ENCODE measurements at regions of chr11 and their contacts with region 1.

Region 1: GRCh38 chr11:17063171-17064002 is 14.1 kb downstream of the RPS13 start:
- DNase-seq: peak; percentile 70 to 87 (median 87)
- ATAC-seq: peak; percentile 92 to 94
- H3K4me3 ChIP-seq: no peak overlapping the region
- H3K27ac ChIP-seq: no peak overlapping the region
- H3K4me1 ChIP-seq: no peaks in the 10 kb centered on the region
- H3K27me3 ChIP-seq: no peaks in the 10 kb centered on the region

Region 2: GRCh38 chr11:16820324-16821092 is 242.9 kb before region 1 on chr11:
- intact Hi-C with region 1: loop called in 1 of 4 experiments (anchors 5 kb)
- DNase-seq: peak; percentile 82 to 94 (median 90)
- ATAC-seq: peak; percentile 60 to 74
- H3K4me3 ChIP-seq: no peak overlapping the region
- H3K27ac ChIP-seq: peak overlapping the region; percentile 61
- H3K4me1 ChIP-seq: peaks cover 6% of the 10 kb centered on the region
- H3K27me3 ChIP-seq: no peaks in the 10 kb centered on the region

Region 3: GRCh38 chr11:16881074-16881709 is 182.2 kb before region 1 on chr11:
- intact Hi-C with region 1: no loop called
- DNase-seq: peak; percentile 70 to 81 (median 79)
- ATAC-seq: peak; percentile 86 to 91
- H3K4me3 ChIP-seq: no peak overlapping the region
- H3K27ac ChIP-seq: no peak overlapping the region
- H3K4me1 ChIP-seq: peaks cover 7% of the 10 kb centered on the region
- H3K27me3 ChIP-seq: no peaks in the 10 kb centered on the region

Region 4: DNA sequence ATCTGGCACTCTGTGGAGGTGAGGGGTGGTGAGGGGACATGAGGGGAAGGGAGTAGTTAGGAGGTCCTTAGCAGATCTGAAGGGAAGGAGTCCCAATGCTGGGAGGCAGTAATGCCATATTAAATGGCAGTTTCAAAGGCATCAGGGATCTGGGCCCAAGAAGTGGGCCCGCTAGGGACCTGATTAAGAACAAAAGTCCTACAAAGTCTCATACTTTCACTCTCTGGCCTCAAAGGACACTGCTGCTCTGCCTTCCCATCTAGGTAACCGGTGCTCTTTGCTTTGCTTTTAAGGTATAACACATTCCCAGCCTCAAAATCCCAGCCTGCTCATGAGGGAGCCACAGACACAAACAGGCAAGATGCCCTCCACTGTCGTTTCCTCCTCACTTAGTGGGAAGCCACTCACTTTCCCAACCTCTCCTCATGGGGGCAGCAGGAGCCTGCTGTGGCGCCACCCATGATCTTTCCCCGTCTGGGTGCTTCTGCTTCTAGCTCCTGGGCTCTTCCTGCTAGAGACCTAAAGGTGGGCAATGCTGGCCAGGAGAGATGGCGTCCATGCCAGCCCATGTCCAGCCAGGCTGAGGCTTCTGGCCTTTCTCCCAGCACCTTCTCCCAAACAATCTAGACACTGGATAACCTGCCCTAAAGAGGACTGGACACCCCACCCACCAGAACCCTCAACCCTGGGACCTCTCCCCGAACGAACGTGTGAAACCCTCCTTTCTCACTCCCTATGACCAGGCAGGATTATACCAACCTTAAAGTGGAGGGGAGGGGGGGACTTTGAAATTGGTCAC is 117.5 kb before region 1 on chr11:
- intact Hi-C with region 1: loop called (anchors 2 to 5 kb)
- DNase-seq: peak; percentile 53 to 75 (median 71)
- ATAC-seq: peak; percentile 78 to 80
- H3K4me3 ChIP-seq: no peak overlapping the region
- H3K27ac ChIP-seq: no peak overlapping the region
- H3K4me1 ChIP-seq: no peaks in the 10 kb centered on the region
- H3K27me3 ChIP-seq: no peaks in the 10 kb centered on the region

Measured in right cardiac atrium (tissue), 5 donors.